ENCODE measurements at regions of chr1 and their contacts with region 1.

Region 1: DNA sequence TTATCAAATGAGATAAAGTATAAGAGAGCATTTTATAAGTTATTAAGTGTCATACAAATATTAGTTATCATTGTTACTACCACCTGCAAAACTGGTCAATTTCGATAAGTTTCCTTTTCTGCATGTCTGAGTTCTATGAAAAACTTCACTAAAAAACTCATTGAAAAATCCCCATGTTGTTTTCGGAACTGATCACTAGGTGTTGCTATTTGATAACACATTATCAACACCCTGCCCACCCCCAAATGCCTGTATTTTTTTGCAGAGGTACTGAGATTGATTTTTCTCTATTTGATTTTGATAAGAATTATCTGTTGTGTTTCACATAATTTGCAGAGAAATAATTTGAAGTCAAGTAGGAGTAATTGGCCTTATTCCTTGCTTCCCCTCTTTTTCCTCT is 22.1 kb upstream of the DISP1 start:
- DNase-seq: peak; percentile 38
- ATAC-seq: no peak
- H3K4me3 ChIP-seq: no peak overlapping the region
- H3K27ac ChIP-seq: no peak overlapping the region
- H3K4me1 ChIP-seq: no peaks in the 10 kb centered on the region
- H3K27me3 ChIP-seq: peaks cover 6% of the 10 kb centered on the region; the same call in 1 of the 2 replicates
- CTCF ChIP-seq: peak; percentile 79
- POLR2A ChIP-seq: no peak
- RAD21 ChIP-seq: peak; percentile 90

Region 2: DNA sequence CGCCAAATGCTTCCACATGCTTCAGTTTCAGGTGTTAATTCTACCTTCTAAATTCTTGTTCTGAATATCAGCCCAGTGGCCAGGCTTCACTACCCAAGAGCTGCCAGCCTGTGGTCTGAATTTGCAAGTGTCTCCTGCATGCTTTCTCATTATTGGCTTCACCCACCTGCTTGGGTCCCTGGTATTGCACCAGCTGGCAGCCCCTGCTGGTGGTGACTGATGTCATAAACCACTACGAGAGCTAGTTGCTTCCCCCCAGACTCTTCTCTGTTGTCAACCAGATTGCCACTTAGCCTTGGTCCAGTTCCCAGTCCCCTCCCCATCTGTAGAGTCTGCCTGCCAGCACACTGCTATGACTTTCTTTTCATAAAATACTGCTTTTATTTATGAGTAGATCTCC is 853.1 kb before region 1 on chr1:
- CTCF ChIA-PET with region 1: no interaction called
- POLR2A ChIA-PET with region 1: no interaction called
- dilution Hi-C with region 1: no loop called
- in situ Hi-C with region 1: no loop called
- intact Hi-C with region 1: no loop called
- DNase-seq: no peak
- ATAC-seq: no peak
- H3K4me3 ChIP-seq: no peak overlapping the region
- H3K27ac ChIP-seq: no peak overlapping the region
- H3K4me1 ChIP-seq: no peaks in the 10 kb centered on the region
- H3K27me3 ChIP-seq: no peaks in the 10 kb centered on the region
- CTCF ChIP-seq: no peak
- POLR2A ChIP-seq: no peak
- RAD21 ChIP-seq: no peak

Region 3: GRCh38 chr1:223081181-223081994 is 288.6 kb after region 1 on chr1:
- CTCF ChIA-PET with region 1: interaction called, 6 read pairs
- POLR2A ChIA-PET with region 1: no interaction called
- dilution Hi-C with region 1: loop called (anchors 25 kb)
- in situ Hi-C with region 1: loop called (anchors 5 kb)
- intact Hi-C with region 1: loop called (anchors 1 kb)
- DNase-seq: peak; percentile 73
- ATAC-seq: peak; percentile 98
- H3K4me3 ChIP-seq: peak overlapping the region; percentile 26
- H3K27ac ChIP-seq: no peak overlapping the region
- H3K4me1 ChIP-seq: no peaks in the 10 kb centered on the region
- H3K27me3 ChIP-seq: peaks cover 52% of the 10 kb centered on the region
- CTCF ChIP-seq: peak; percentile 91
- POLR2A ChIP-seq: no peak
- RAD21 ChIP-seq: peak; percentile 98

Region 4: GRCh38 chr1:223087291-223088255 is 294.8 kb after region 1 on chr1:
- CTCF ChIA-PET with region 1: interaction called, 16 read pairs
- POLR2A ChIA-PET with region 1: no interaction called
- dilution Hi-C with region 1: loop called (anchors 25 kb)
- in situ Hi-C with region 1: loop called (anchors 5 kb)
- intact Hi-C with region 1: loop called (anchors 1 kb)
- DNase-seq: peak; percentile 20
- ATAC-seq: no peak
- H3K4me3 ChIP-seq: no peak overlapping the region
- H3K27ac ChIP-seq: no peak overlapping the region
- H3K4me1 ChIP-seq: no peaks in the 10 kb centered on the region
- H3K27me3 ChIP-seq: peaks cover 52% of the 10 kb centered on the region
- CTCF ChIP-seq: no peak
- POLR2A ChIP-seq: no peak
- RAD21 ChIP-seq: no peak

Region 5: GRCh38 chr1:223123011-223123610 is 330.4 kb after region 1 on chr1:
- CTCF ChIA-PET with region 1: interaction called, 7 read pairs
- POLR2A ChIA-PET with region 1: no interaction called
- dilution Hi-C with region 1: no loop called
- in situ Hi-C with region 1: no loop called
- intact Hi-C with region 1: loop called (anchors 1 kb)
- DNase-seq: no peak
- ATAC-seq: peak; percentile 27; the same call in 1 of the 2 replicates
- H3K4me3 ChIP-seq: no peak overlapping the region
- H3K27ac ChIP-seq: no peak overlapping the region
- H3K4me1 ChIP-seq: no peaks in the 10 kb centered on the region
- H3K27me3 ChIP-seq: peaks cover 5% of the 10 kb centered on the region
- CTCF ChIP-seq: no peak
- POLR2A ChIP-seq: no peak
- RAD21 ChIP-seq: no peak

Region 6: GRCh38 chr1:223683586-223684487 is 891.1 kb after region 1 on chr1:
- CTCF ChIA-PET with region 1: no interaction called
- POLR2A ChIA-PET with region 1: no interaction called
- dilution Hi-C with region 1: no loop called
- in situ Hi-C with region 1: no loop called
- intact Hi-C with region 1: loop called (anchors 5 kb)
- DNase-seq: peak; percentile 60
- ATAC-seq: peak; percentile 88
- H3K4me3 ChIP-seq: no peak overlapping the region
- H3K27ac ChIP-seq: no peak overlapping the region
- H3K4me1 ChIP-seq: no peaks in the 10 kb centered on the region
- H3K27me3 ChIP-seq: peaks cover 30% of the 10 kb centered on the region
- CTCF ChIP-seq: peak; percentile 84
- POLR2A ChIP-seq: no peak
- RAD21 ChIP-seq: peak; percentile 91

Region 7: DNA sequence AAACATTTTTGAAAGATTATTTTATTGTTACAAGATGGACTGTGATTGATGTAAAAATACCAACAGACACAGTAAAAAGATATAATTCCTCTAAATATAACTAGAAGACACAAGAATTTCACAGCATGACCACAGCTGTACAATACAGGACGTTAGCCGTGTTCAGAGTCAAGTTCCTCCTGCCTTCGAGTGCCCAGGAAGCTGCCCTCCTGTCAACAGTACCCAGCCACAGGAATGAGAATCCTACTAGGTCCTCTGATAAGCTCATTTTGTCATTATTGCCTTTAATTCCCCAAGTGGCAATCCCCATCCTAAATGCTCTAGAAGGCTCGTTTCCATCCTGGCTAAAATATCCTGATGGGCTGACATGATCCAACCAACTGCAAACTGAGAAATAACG is 903.2 kb after region 1 on chr1:
- CTCF ChIA-PET with region 1: no interaction called
- POLR2A ChIA-PET with region 1: no interaction called
- dilution Hi-C with region 1: no loop called
- in situ Hi-C with region 1: loop called (anchors 10 kb)
- intact Hi-C with region 1: no loop called
- DNase-seq: no peak
- ATAC-seq: no peak
- H3K4me3 ChIP-seq: no peak overlapping the region
- H3K27ac ChIP-seq: no peak overlapping the region
- H3K4me1 ChIP-seq: peaks cover 14% of the 10 kb centered on the region
- H3K27me3 ChIP-seq: no peaks in the 10 kb centered on the region
- CTCF ChIP-seq: no peak
- POLR2A ChIP-seq: no peak
- RAD21 ChIP-seq: no peak

Measured in IMR-90 (cell line).